ENCODE measurements at regions of chr1 and their contacts with region 1.

Region 1: DNA sequence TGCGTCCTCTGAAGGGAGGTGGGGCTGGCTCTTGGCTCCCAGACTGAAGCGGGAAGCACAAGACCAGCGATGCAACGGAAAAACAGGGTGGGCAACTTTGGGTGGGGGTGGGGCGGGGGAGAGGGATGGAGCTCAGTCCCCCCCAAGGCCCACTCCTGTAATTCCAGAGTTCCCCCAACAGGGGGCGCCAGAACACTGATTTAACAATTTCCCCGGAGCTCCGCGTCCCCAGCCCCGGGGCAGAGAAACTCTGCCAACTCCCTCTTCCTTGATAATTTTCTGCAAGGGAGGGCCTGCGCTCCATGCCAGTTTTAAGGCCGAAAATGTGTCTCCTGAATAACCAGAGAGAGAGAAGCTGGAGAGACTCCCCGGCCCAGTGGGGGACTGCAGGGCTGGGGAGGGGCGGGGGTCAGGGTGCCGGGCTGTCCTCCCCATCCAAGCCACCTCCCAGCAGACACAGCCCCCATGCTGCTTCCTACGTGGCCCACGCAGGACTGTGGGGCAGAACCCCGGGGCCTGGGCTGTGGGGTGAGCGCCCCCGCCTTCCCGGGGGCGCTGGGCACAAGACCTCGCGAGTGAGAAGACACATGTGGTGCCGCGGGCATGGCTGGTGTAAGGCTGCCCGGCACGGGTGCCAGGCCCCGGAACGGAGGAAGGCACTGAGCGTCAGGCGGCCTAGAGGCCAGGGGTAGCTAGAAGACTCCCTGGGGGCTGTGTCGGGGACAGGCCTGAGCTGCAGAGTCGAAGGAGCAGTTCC is 51.4 kb downstream of the KIF21B start:
- DNase-seq: peak; percentile 44 to 72
- ATAC-seq: peak; percentile 44

Region 2: GRCh38 chr1:200866521-200866920 is 105.6 kb before region 1 on chr1:
- intact Hi-C with region 1: no loop called
- DNase-seq: peak in 1 of 2 donors; percentile 39
- ATAC-seq: peak; percentile 32

Region 3: GRCh38 chr1:201042779-201043461 is 70.8 kb after region 1 on chr1:
- intact Hi-C with region 1: loop called (anchors 5 kb)
- DNase-seq: peak in 1 of 2 donors; percentile 82
- ATAC-seq: peak; percentile 93

Region 4: GRCh38 chr1:201049248-201049831 is 77.2 kb after region 1 on chr1:
- intact Hi-C with region 1: loop called (anchors 5 kb)
- DNase-seq: no peak
- ATAC-seq: no peak

Region 5: DNA sequence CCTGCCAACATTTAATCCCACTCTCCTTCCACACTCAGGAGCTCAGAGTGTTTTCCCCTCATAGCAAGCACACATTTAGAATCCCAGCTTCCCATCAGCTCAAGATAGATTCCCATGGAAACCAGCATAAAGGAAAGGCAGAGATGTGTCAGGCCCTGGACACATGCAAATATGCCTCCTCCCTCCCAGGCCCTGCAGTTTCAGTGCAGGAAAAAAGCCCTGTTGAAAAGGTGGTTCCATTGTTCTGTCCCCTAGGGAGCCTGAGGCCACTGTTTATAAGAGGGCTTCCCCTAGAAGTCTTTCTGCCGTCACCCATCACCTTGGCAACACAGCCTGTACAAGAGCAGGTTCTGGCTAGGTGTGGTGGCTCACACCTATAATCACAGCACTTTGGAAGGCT is 136.5 kb after region 1 on chr1:
- intact Hi-C with region 1: loop called (anchors 5 to 10 kb)
- DNase-seq: no peak
- ATAC-seq: no peak

Region 6: DNA sequence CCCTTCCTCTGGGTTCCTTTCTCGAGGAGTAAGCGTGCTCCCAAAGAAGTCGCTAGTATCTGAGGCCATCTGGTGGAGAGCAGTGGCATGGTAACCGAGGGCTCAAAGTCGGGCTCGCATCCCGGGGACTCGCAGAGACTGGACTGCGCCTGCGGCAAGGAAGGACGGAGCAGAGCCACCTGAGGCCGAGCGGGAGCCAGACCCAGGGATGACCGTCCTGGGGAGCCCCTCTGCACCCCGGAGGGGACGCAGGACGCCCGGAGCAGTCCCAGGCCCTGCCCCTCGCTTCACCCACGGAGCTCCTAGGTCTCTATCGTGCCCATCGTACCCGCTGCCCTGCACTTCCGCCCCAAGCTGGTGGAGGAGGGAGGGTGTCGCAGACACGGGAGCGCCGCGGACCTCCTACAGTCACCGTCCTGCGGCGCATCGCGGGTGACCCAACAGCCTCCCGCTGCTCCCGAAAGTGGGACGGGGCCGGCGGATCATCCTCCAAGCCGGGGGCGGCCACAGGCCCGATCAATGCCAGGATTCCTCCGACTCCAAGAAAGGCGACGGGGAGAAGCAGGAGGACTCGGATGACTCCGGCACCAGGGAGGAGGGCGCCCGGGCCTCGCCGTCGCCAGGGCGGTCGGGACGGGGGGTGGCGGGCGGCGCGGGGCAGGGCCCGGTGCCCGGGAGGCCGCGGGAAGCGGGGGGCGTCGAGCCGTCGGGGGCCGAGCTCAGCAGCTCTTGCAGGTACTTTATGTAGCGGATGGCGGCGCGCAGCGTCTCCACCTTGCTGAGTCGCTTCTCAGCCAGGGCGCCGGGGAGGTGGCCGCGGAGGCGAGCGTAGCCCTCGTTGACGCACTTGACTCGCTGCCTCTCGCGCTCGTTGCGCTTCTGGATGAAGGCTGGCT is 142.4 kb after region 1 on chr1:
- intact Hi-C with region 1: loop called (anchors 5 to 10 kb)
- DNase-seq: peak; percentile 88 to 90
- ATAC-seq: peak; percentile 97

Region 7: GRCh38 chr1:201229771-201230635 is 257.9 kb after region 1 on chr1:
- intact Hi-C with region 1: loop called in 1 of 2 experiments (anchors 10 kb)
- DNase-seq: no peak
- ATAC-seq: no peak

Measured in left colon (tissue), 2 donors.